Activated CD4-positive, alpha-beta T cell treated with anti-CD3 and anti-CD28 coated beads, Interleukin-2, amount 10 ng/mL, durations not matched to agents 24 days and 14 days (primary cell): ENCODE measurements at regions of chr3 and their contacts with region 1.

Region 1: GRCh38 chr3:183385698-183386613 is 42.5 kb downstream of the MCF2L2 start:
- DNase-seq: peak; percentile 89
- H3K4me3 Mint-ChIP-seq: no peak overlapping the region
- H3K27ac Mint-ChIP-seq: no peak overlapping the region
- H3K4me1 Mint-ChIP-seq: peaks cover 16% of the 10 kb centered on the region
- H3K27me3 Mint-ChIP-seq: no peaks in the 10 kb centered on the region

Region 2: DNA sequence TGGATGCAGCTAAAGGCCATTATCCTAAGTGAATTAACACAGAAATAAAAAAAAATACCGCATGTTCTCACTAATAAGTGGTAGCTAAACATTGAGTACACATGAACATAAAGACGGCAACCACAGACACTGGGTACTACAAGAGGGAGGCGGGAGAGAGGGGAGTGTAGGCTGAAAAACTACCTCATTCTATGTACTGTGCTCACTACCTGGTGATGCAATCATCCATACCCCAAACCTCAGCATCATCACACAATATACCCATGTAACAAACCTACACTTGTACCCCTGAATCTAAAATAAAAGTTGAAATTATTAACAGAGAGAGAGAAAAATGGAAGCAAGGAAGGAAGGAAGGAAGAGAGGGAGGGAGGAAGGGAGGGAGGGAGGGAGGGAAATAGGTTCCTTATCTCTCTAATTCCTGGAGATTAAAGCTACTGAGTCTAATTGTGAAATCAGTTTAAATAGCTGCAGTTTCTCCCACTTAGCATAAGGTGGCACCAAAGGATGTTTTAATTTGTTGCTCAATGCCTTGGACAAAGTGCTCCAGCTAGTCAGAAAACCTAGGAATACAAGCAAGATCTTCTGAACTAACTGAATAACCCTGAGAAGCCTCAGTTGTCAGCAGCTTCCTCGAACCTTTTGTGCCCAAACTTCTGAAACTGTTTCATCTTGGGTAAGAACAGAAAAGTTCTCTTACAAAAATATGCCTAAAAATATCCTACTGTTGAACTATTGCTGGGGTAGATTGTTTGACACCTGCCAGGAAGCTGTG is 672.0 kb before region 1 on chr3:
- intact Hi-C with region 1: loop called (anchors 2 kb)
- DNase-seq: peak; percentile 68
- H3K4me3 Mint-ChIP-seq: no peak overlapping the region
- H3K27ac Mint-ChIP-seq: peak overlapping the region; percentile 56
- H3K4me1 Mint-ChIP-seq: peaks cover 15% of the 10 kb centered on the region
- H3K27me3 Mint-ChIP-seq: peaks cover 4% of the 10 kb centered on the region

Region 3: GRCh38 chr3:183178629-183179549 is 207.1 kb before region 1 on chr3:
- intact Hi-C with region 1: loop called (anchors 1 kb)
- DNase-seq: peak; percentile 79
- H3K4me3 Mint-ChIP-seq: peak overlapping the region; percentile 86
- H3K27ac Mint-ChIP-seq: no peak overlapping the region
- H3K4me1 Mint-ChIP-seq: peaks cover 10% of the 10 kb centered on the region
- H3K27me3 Mint-ChIP-seq: peaks cover 37% of the 10 kb centered on the region

Region 4: GRCh38 chr3:183306798-183307671 is 78.9 kb before region 1 on chr3:
- intact Hi-C with region 1: loop called (anchors 5 kb)
- DNase-seq: peak; percentile 79
- H3K4me3 Mint-ChIP-seq: peak overlapping the region; percentile 20
- H3K27ac Mint-ChIP-seq: peak overlapping the region; percentile 65
- H3K4me1 Mint-ChIP-seq: peaks cover 28% of the 10 kb centered on the region
- H3K27me3 Mint-ChIP-seq: no peaks in the 10 kb centered on the region

Region 5: GRCh38 chr3:183515968-183516851 is 130.3 kb after region 1 on chr3:
- intact Hi-C with region 1: no loop called
- DNase-seq: peak; percentile 88
- H3K4me3 Mint-ChIP-seq: peak overlapping the region; percentile 39
- H3K27ac Mint-ChIP-seq: peak overlapping the region; percentile 90
- H3K4me1 Mint-ChIP-seq: peaks cover 67% of the 10 kb centered on the region
- H3K27me3 Mint-ChIP-seq: no peaks in the 10 kb centered on the region

Region 6: GRCh38 chr3:183635431-183636220 is 249.7 kb after region 1 on chr3 and contains the start of gene KLHL24:
- intact Hi-C with region 1: no loop called
- DNase-seq: peak; percentile 97
- H3K4me3 Mint-ChIP-seq: peak within 1 kb of the TSS; percentile 94
- H3K27ac Mint-ChIP-seq: peak within 1 kb of the TSS; percentile 96
- H3K4me1 Mint-ChIP-seq: peaks cover 20% of the 10 kb centered on the region
- H3K27me3 Mint-ChIP-seq: no peaks in the 10 kb centered on the region
- total RNA-seq, gene KLHL24: 6.7 and 6.9 TPM in 2 replicates

Region 7: DNA sequence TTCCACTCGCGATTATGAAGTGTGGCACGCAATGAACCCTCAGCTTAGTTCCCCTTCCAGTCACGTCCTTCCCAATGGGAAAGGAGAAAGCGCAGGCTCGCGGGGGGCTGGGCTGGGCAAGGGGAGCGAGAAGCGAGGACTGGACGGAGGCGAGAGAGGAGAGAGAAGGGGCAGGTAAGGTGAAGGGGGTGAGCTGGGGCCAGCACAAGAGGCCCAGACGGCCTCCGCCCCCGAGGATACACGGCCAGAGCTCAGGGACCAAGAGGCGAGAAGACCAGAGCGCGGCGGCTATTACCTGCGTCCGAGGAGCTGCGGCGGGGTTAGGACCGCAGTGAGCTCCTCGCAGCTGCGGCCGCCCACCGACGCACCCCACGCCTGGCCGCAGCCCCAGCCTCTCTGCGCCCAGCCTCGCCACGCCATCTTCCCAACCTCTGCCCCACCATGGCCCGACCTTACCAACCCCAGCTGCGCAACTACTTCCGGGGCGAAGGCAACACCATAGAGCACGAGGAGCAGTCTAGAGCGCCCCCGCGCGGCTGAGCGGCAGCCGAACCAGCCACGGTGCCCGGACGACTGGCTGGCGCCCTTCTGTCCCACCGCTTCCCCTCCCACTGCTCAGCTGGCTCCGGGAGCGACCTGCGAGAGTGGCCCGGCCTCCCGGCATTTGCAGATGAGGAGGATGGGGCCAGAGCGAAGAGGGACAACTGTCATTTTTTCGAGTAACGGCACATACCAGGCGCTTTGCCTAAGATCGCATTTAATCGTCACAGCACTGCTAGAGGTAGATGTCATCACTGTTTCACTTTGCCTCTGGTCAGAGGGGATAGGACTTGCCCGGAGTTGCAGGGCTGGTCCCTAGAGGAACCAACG is 498.7 kb after region 1 on chr3 and contains the start of gene PARL:
- intact Hi-C with region 1: loop called (anchors 10 kb)
- DNase-seq: peak; percentile 99
- H3K4me3 Mint-ChIP-seq: peak within 1 kb of the TSS; percentile 94
- H3K27ac Mint-ChIP-seq: peak within 1 kb of the TSS; percentile 93
- H3K4me1 Mint-ChIP-seq: peaks cover 23% of the 10 kb centered on the region
- H3K27me3 Mint-ChIP-seq: peaks cover 2% of the 10 kb centered on the region
- total RNA-seq, gene PARL: 89.5 and 91.4 TPM in 2 replicates